GM23248 (cell line): ENCODE measurements at regions of chr20 and their contacts with region 1.

Region 1: DNA sequence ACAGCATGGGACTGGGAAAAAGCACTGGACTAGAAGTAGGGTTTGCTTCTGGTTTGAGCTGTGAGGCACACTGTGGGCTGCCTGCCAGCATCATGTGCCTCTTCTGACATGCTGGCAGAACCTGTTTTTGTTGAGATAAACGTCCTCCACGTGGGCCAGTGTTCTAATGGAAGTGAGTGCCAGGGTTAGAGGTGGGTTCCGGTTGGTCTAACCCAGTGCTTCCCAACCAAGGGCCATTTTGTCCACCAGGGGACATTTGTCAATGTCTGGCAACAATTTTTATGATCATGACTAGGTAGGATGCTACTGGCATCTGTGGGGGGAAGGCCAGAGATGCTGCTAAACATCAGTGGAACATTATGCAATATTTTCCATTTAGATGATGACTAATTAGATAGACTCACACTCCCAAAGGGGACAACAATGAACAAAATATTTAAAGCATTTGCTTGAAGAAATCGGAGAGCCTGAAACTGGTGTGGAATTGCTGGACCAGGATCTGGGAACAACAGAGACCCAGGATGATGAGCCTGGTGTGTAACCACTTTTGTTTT is 7.8 kb upstream of the APMAP start:
- DNase-seq: peak; percentile 94
- H3K4me3 ChIP-seq: no peak overlapping the region
- H3K27ac ChIP-seq: peak overlapping the region; percentile 59
- H3K4me1 ChIP-seq: peaks cover 10% of the 10 kb centered on the region
- H3K27me3 ChIP-seq: no peaks in the 10 kb centered on the region

Region 2: DNA sequence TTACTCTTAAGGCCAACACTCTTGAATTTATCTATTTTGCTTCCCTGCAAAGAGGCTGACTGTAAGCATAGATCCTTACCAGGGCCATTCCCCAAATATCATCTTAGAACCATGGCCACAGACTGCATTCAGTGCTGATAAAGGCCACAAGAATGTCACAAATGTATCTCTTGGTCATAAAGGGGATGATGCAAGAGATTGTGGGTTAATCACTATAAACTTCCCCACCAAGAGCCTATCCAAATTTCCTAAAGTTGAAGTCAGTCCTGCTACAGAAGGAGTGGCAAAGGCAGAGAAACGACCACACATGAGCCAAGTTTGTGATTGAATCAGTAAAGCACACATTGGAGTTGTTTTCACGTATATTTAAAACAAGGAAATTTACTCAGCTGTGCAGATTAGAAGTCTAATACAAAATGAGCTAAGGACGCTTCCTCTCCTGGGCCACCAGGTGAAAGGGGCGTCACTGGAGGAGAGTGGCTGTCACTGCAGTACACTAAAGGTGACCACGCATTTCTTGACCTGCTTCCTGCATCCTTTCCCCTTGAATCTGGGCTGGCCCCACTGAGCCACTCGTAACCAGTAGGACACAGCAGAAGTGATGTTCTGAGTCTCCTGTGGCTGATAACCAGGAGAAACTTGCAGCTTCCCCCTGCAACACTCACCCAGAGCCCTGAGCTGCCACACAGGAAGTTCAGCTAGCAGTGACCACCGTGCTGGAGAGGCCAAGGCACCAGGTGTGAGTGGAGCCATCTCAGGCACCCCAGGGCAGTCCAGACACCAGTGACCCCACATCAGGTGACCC is 349.0 kb before region 1 on chr20:
- in situ Hi-C with region 1: no loop called
- DNase-seq: peak; percentile 92
- H3K4me3 ChIP-seq: peak overlapping the region; percentile 21; the same call in 1 of the 2 replicates
- H3K27ac ChIP-seq: peak overlapping the region; percentile 70
- H3K4me1 ChIP-seq: peaks cover 37% of the 10 kb centered on the region
- H3K27me3 ChIP-seq: no peaks in the 10 kb centered on the region

Region 3: DNA sequence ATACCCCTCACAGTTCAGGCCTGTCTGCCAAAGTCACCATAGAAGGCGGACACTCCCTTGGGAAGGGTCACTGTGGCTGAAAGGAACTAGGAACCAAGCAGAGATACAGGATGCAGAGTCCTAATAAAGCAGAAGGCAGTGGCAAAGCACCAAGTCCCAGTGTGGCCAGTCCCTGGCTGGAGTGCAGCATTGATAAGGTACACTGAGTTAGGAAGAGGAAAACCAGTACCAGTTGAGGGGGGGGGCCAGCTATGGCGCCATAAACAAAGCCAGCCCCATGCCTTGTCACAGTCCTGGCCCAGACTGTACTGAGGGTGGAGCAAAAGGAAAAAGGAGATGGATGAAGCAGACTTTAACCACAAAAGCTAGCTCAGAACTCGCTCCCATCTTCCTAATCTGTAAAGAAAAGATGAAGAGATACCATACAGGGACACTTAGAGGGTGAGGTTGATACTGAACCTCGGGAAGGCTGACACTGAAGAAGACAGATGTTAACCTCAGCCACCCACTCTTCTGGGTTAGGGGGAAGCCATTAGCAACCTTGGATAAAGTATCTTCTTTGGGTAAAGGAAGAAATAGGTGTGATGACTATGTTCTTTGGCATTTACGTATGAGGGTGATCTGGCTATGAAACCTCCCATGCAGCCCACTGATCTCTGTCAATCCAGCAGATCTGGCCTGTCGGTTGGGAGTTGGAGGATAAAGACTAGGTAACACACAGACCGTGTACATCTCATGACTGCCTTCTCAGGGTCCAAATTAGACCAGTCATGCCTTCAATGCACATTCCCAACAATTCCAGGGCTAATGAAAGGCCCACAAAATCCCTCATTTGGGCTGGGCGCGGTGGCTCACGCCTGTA is 382.6 kb after region 1 on chr20:
- in situ Hi-C with region 1: no loop called
- DNase-seq: no peak
- H3K4me3 ChIP-seq: no peak overlapping the region
- H3K27ac ChIP-seq: no peak overlapping the region
- H3K4me1 ChIP-seq: no peaks in the 10 kb centered on the region
- H3K27me3 ChIP-seq: no peaks in the 10 kb centered on the region

Region 4: DNA sequence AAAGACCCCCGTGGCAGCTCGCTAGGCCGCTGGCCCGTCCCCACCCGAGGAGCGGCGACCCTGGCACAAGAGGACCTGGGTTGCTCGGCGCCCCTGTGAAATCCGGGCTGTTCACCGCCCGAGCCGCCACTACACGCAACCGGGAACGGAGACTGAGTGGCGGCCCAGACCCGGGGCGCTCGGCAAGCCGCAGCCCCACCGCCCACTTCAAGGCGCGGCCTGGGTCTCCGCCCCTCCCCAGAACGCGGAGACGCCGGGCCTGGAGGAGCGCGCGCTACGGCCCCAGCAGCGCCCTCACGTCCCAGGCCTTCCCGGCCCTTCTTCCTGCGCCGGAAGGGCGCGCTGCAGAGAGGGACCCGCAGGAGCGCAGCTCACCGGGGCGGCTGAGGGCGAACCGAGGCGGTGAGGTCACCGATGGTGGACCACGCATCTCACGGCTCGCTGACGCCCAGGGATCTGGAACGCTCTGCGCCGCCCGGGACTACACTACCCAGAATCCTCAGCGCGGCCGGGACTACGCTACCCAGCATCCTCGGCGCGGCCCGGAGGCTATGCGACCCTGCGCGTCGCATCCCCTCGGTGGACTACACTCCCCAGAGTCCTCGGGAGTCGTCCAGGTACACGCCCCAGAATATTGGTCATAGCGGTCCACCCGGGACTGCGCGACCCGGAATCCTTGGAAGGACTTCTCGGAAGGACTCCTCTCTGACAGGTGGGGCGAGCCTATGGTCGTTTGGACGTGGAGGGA is 696.2 kb after region 1 on chr20 and contains the start of gene ZNF337:
- in situ Hi-C with region 1: loop called (anchors 25 kb)
- DNase-seq: peak; percentile 98
- H3K4me3 ChIP-seq: peak within 1 kb of the TSS; percentile 94
- H3K27ac ChIP-seq: peak within 1 kb of the TSS; percentile 66
- H3K4me1 ChIP-seq: peaks cover 5% of the 10 kb centered on the region; the same call in 1 of the 2 replicates
- H3K27me3 ChIP-seq: no peaks in the 10 kb centered on the region
- total RNA-seq, gene ZNF337: 6.4 and 9.1 TPM in 2 replicates